Psoas muscle (tissue), 8 donors: ENCODE measurements at regions of chr7 and their contacts with region 1.

Region 1: GRCh38 chr7:51315393-51316261 is 982 bp downstream of the COBL start:
- DNase-seq: peak; percentile 29 to 66
- ATAC-seq: peak; percentile 61 to 77 (median 68)
- H3K4me3 ChIP-seq: peak overlapping the region; percentile 81
- H3K27ac ChIP-seq: peak overlapping the region; percentile 90
- H3K4me1 ChIP-seq: no peaks in the 10 kb centered on the region
- H3K27me3 ChIP-seq: no peaks in the 10 kb centered on the region
- CTCF ChIP-seq: no peak

Region 2: DNA sequence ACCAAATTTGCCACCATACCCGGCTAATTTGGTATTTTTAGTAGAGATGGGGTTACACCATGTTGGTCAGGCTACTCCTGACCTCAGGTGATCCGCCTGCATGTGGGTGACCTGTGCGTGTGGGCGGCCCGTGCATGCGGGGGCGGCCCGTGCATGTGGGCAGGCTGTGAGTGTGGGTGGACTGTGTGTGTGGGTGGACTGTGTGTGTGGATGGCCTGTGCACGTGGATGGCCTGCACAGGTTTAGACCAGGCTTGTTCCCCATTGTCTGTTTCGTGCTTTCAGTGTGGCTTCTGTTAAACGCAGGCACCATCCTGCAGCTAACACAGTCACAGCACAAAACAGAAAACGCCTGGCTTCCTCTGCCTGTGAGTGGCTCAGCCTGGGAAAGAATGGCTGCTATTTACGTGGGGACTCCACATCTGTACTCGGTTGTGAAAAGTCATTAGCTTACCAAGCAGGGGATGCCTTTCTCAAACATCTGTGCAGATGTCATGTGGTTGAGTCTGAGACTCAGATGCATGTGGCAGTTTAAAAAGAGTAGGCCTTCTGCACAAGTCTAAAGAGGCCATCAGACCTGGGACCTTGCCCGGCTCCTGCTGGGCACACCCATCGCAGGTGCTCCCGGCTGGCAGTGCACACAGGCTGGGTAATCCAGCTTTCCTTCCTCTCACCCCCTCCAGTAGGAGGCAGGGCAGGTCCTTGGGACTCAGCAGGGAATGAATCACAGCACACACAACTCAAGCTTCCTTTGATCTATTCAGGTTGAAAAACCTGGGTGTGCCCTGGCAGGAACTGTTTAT is 90.6 kb before region 1 on chr7:
- intact Hi-C with region 1: loop called in 1 of 2 experiments (anchors 5 kb)
- DNase-seq: peak in 1 of 2 donors; percentile 69
- ATAC-seq: peak; percentile 69 to 82 (median 72)
- H3K4me3 ChIP-seq: no peak overlapping the region
- H3K27ac ChIP-seq: peak overlapping the region; percentile 47
- H3K4me1 ChIP-seq: peaks cover 36% of the 10 kb centered on the region
- H3K27me3 ChIP-seq: no peaks in the 10 kb centered on the region
- CTCF ChIP-seq: peak; percentile 51

Region 3: DNA sequence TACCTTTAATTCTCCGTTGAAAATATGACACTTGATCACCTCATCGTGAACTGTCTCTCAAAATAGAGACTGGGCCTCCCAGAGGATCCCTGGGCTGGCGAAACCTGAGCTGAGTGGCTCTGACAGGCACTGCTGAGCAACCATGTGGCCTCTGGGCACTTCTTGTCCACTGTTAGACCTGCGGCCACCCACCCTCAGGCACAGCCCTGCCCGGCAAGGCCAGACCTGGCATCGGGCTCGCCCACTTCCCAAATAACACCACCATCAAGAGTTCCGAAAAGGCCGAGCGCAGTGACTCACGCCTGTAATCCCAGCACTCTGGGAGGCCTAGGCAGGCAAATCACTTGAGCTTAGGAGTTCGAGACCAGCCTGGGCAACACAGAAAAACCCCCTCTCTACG is 81.5 kb before region 1 on chr7:
- intact Hi-C with region 1: loop called (anchors 2 to 5 kb)
- DNase-seq: peak; percentile 86 to 95
- ATAC-seq: peak; percentile 97 to 99 (median 98)
- H3K4me3 ChIP-seq: peak overlapping the region; percentile 40
- H3K27ac ChIP-seq: peak overlapping the region; percentile 85
- H3K4me1 ChIP-seq: peaks cover 18% of the 10 kb centered on the region
- H3K27me3 ChIP-seq: no peaks in the 10 kb centered on the region
- CTCF ChIP-seq: no peak

Region 4: GRCh38 chr7:51278797-51279196 is 36.8 kb before region 1 on chr7:
- intact Hi-C with region 1: loop called in 1 of 2 experiments (anchors 2 kb)
- DNase-seq: peak; percentile 46 to 77
- ATAC-seq: peak; percentile 74 to 85 (median 81)
- H3K4me3 ChIP-seq: peak overlapping the region; percentile 53
- H3K27ac ChIP-seq: peak overlapping the region; percentile 92
- H3K4me1 ChIP-seq: peaks cover 41% of the 10 kb centered on the region
- H3K27me3 ChIP-seq: no peaks in the 10 kb centered on the region
- CTCF ChIP-seq: no peak

Region 5: DNA sequence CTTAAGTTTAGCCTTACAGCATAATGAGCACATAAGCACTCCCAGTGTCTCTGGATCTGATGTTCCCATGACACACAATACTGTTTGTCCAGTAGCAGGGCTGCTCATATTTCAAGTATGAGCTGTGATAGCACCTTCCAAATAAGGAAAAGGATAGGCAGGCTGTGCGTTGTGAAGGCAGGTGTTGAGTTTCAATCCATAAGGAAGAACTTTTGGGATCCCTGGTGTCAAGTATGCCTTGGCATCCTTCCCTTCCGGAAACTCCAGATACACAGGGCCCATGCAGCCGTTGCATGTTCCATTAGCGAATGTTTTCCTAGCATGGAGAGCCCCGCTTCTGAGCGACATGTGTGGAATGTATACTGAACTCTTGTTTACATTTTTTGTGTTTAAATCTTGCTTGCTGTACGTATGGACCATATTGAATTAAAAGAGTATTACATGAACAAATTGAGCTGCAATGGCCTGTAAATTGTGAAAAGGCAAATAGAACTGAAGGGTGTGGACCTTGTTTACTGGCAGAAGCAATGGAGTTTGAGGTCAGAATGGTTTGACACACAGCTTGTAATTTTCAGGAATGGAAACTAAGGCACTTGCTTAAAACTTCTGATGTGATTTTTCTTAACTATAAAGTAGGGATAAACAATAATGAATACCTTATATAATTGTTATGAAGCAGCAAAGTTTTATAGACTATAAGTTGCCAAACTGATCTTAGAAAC is 34.7 kb after region 1 on chr7:
- intact Hi-C with region 1: loop called in 1 of 2 experiments (anchors 5 kb)
- DNase-seq: no peak
- ATAC-seq: peak; percentile 74 to 95 (median 86)
- H3K4me3 ChIP-seq: no peak overlapping the region
- H3K27ac ChIP-seq: no peak overlapping the region
- H3K4me1 ChIP-seq: peaks cover 9% of the 10 kb centered on the region
- H3K27me3 ChIP-seq: no peaks in the 10 kb centered on the region
- CTCF ChIP-seq: no peak

Region 6: DNA sequence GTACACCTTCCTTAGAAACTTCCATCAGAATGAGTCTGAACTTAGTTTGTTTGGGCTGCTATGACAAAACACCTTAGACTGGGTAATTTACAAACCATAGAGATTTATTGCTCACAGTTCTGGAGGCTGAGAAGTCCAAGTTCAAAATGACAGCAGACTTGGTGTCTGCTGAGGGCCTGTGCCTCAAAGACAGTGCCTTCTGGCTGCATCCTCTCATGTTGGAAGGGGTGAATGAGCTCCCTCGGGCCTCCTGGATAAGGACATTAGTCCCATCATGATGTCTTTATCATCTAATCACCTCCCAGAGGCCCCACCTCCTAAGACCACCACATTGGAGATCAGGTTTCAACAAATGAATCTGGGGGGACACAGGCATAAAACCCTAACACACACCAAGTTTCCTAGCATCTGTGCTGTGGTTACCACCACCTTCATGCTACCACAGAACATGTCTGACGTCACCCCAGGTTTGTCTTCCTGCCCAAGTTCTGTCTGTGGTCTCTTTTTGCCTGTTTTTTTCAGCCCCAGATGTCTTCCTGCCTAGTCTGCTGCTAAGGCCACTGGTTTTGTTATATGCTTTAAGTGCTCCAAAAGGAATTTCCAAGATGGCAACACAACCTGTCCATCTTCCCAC is 151.9 kb after region 1 on chr7:
- intact Hi-C with region 1: no loop called
- DNase-seq: no peak
- ATAC-seq: no peak
- H3K4me3 ChIP-seq: no peak overlapping the region
- H3K27ac ChIP-seq: no peak overlapping the region
- H3K4me1 ChIP-seq: no peaks in the 10 kb centered on the region
- H3K27me3 ChIP-seq: peaks cover 0 to 14% (median 0%) of the 10 kb centered on the region in 3 donors
- CTCF ChIP-seq: no peak

Region 7: DNA sequence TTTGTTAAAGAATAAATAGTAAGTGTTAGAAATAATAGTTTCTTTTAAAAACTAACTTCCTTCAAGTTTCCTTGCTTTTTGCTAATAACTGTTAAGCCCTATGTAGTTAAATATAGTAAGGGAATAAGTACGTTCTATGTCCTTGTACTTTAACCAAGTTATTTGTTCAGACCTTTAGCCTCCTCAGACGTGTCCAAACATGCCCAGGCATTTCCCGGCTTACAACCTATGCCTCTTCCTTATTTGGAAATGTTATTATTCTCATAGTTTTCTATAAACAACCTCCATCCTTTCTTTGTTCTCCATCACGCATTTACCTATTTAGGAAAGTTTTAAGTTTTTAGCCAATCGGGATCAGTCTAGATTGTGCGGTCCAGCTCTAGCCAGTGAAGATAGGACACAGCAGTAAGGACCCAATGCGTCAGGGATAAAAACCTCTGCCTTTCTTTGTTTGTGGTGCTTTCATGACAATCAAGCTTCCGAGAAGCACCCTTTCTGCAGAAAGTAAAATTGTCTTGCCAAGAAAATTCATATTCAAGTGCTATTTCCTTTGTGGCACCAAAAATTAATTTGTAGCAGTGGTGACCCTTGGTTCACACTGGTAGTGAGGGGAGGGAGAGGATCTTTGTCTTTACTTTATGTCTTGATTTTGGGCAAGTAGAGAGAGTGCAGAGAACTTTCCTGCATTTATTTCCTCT is 868.5 kb after region 1 on chr7:
- intact Hi-C with region 1: no loop called
- DNase-seq: no peak
- ATAC-seq: no peak
- H3K4me3 ChIP-seq: no peak overlapping the region
- H3K27ac ChIP-seq: no peak overlapping the region
- H3K4me1 ChIP-seq: no peaks in the 10 kb centered on the region
- H3K27me3 ChIP-seq: no peaks in the 10 kb centered on the region
- CTCF ChIP-seq: no peak